ENCODE measurements at regions of chr22 and their contacts with region 1.

Region 1: GRCh38 chr22:50582562-50583293 is at the start of gene CHKB:
- H3K4me3 Mint-ChIP-seq: peak within 1 kb of the TSS; percentile 80
- H3K27ac Mint-ChIP-seq: peak within 1 kb of the TSS; percentile 95
- H3K4me1 Mint-ChIP-seq: peaks cover 39% of the 10 kb centered on the region
- H3K27me3 Mint-ChIP-seq: peaks cover 10% of the 10 kb centered on the region

Region 2: GRCh38 chr22:50417411-50418210 is 165.1 kb before region 1 on chr22:
- intact Hi-C with region 1: no loop called
- H3K4me3 Mint-ChIP-seq: no peak overlapping the region
- H3K27ac Mint-ChIP-seq: peak overlapping the region; percentile 92
- H3K4me1 Mint-ChIP-seq: peaks cover 31% of the 10 kb centered on the region
- H3K27me3 Mint-ChIP-seq: no peaks in the 10 kb centered on the region

Region 3: DNA sequence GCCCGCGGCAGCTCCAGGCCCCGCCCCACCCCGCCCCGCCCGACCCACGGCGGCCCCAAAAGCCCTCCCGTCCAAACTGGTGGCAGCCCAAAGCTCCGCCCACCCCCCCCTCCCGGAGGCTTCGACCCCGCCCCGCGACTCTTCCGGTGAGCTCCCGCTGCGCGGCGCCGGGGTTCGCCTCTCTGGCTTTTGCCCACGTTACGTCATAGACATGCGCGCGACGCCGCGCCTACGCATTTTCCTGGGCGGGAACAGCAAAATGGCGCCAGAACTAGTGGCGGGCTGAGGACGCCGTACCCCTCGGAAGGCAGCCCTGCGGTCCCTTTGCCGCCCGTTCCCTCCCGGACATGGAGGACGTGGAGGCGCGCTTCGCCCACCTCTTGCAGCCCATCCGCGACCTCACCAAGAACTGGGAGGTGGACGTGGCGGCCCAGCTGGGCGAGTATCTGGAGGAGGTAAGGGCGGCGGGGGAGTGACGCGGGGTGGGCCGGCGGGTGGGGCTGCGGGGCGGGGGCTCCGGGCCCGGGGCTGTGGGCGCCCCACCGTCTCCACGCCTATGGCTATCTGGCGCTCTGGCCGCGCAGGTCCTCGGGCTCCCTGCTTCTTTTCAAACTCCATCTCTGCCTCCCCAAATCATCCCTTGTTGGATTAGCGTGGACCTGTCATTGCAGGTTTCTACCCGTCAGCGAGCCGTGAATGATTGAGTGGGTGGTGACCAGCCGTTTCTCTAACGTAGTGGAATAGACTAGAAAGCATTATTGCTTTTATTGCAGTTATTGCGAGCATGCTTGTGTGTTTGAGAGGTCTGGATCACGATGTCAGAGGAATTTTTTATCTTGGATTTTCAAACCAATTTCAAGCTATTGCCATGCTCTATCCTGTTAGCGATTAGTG is 74.5 kb before region 1 on chr22 and contains the start of gene NCAPH2:
- intact Hi-C with region 1: loop called (anchors 5 kb)
- H3K4me3 Mint-ChIP-seq: peak within 1 kb of the TSS; percentile 98
- H3K27ac Mint-ChIP-seq: peak within 1 kb of the TSS; percentile 96
- H3K4me1 Mint-ChIP-seq: peaks cover 35% of the 10 kb centered on the region
- H3K27me3 Mint-ChIP-seq: no peaks in the 10 kb centered on the region

Region 4: DNA sequence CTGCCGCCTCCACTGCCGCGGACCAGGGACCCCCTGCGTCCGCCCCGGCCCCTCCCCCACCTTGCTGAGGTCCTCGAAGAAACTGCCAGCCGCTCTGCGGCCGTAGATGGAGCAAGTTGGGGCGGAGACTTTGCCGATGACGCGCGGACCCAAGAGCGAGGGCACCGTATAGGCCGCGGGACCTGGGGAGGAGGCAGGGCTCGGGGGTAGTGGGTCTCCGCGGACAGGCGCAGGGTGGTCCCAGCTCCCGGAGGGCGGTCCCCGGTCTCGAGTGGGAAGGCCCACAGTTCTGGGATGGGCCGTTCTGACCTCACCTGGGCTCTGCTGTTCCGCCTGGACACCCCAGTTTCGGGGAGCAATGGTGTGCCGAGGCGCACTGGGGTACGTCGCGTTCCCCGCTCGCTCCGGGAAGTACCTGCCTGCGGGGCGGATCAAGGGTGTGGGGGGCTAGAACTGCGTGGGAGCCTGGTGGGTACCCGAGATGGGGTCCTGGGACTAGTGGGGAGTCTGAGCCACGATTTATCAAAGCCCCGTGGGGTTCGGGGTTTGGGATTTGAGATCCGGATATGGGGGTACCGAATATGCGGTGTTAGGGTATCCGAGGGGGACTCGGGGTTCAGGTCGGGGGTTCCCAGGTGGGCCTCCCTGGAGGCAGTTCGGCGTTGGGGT is 51.7 kb before region 1 on chr22:
- intact Hi-C with region 1: loop called (anchors 2 kb)
- H3K4me3 Mint-ChIP-seq: peak overlapping the region; percentile 97
- H3K27ac Mint-ChIP-seq: peak overlapping the region; percentile 95
- H3K4me1 Mint-ChIP-seq: peaks cover 62% of the 10 kb centered on the region
- H3K27me3 Mint-ChIP-seq: no peaks in the 10 kb centered on the region

Region 5: GRCh38 chr22:50537765-50538164 is 45.0 kb before region 1 on chr22:
- intact Hi-C with region 1: loop called (anchors 2 kb)
- H3K4me3 Mint-ChIP-seq: peak overlapping the region; percentile 62
- H3K27ac Mint-ChIP-seq: peak overlapping the region; percentile 95
- H3K4me1 Mint-ChIP-seq: peaks cover 71% of the 10 kb centered on the region
- H3K27me3 Mint-ChIP-seq: no peaks in the 10 kb centered on the region

Region 6: GRCh38 chr22:50599786-50600455 is 17.2 kb after region 1 on chr22:
- intact Hi-C with region 1: loop called (anchors 2 kb)
- H3K4me3 Mint-ChIP-seq: peak overlapping the region; percentile 18
- H3K27ac Mint-ChIP-seq: no peak overlapping the region
- H3K4me1 Mint-ChIP-seq: peaks cover 5% of the 10 kb centered on the region
- H3K27me3 Mint-ChIP-seq: peaks cover 68% of the 10 kb centered on the region